Aorta (tissue), 5 donors: ENCODE measurements at regions of chr1 and their contacts with region 1.

Region 1: GRCh38 chr1:55443175-55443915 is 228.2 kb upstream of the USP24 start:
- DNase-seq: peak; percentile 93 to 94
- ATAC-seq: peak; percentile 96
- H3K4me3 ChIP-seq: no peak overlapping the region
- H3K27ac ChIP-seq: peak overlapping the region in 1 of 2 donors; percentile 58
- H3K4me1 ChIP-seq: peaks cover 0 to 4% of the 10 kb centered on the region in 2 donors
- H3K27me3 ChIP-seq: no peaks in the 10 kb centered on the region

Region 2: GRCh38 chr1:55584526-55585401 is 141.4 kb after region 1 on chr1:
- intact Hi-C with region 1: loop called in 1 of 2 experiments (anchors 10 kb)
- DNase-seq: no peak
- ATAC-seq: peak; percentile 51
- H3K4me3 ChIP-seq: no peak overlapping the region
- H3K27ac ChIP-seq: no peak overlapping the region
- H3K4me1 ChIP-seq: peaks cover 0 to 12% of the 10 kb centered on the region in 2 donors
- H3K27me3 ChIP-seq: no peaks in the 10 kb centered on the region

Region 3: DNA sequence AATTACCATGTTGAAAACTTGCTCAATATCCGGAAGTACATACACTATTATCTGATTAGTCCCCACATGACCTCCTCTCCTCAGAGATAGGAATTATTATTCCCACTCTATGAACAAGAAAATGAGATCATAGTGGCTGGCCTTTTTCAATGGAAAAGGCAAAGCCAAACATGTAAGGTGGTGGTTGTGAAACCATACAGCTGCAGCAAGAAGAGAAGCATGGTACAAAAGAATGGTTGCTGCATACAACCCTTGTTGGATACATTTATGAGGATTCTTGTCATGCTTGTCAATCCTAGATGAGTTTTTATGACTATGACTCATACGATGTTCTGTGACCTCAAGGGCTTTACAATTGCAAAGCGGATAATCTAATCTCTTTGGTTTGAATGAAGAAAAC is 621.4 kb after region 1 on chr1:
- intact Hi-C with region 1: loop called in 1 of 2 experiments (anchors 10 kb)
- DNase-seq: no peak
- ATAC-seq: no peak
- H3K4me3 ChIP-seq: no peak overlapping the region
- H3K27ac ChIP-seq: no peak overlapping the region
- H3K4me1 ChIP-seq: peaks cover 5 to 16% of the 10 kb centered on the region in 2 donors
- H3K27me3 ChIP-seq: no peaks in the 10 kb centered on the region